T-cell (primary cell): ENCODE measurements at regions of chrX and their contacts with region 1.

Region 1: GRCh38 chrX:154360155-154360713 is 14.2 kb downstream of the FLNA start:
- DNase-seq: no peak
- ATAC-seq: no peak
- H3K4me3 ChIP-seq: no peak overlapping the region
- H3K4me3 Mint-ChIP-seq: no peak overlapping the region
- H3K27ac ChIP-seq: peak overlapping the region; percentile 52
- H3K27ac Mint-ChIP-seq: peak overlapping the region in 1 of 2 donors; percentile 34
- H3K4me1 ChIP-seq: peaks cover 0 to 92% of the 10 kb centered on the region in 2 experiments
- H3K4me1 Mint-ChIP-seq: peaks cover 9 to 44% (median 20%) of the 10 kb centered on the region in 3 donors
- H3K27me3 ChIP-seq: no peaks in the 10 kb centered on the region
- H3K27me3 Mint-ChIP-seq: no peaks in the 10 kb centered on the region

Region 2: GRCh38 chrX:153845842-153846241 is 514.4 kb before region 1 on chrX:
- CTCF ChIA-PET with region 1: no interaction called
- POLR2A ChIA-PET with region 1: no interaction called
- DNase-seq: no peak
- ATAC-seq: no peak
- H3K4me3 ChIP-seq: no peak overlapping the region
- H3K4me3 Mint-ChIP-seq: no peak overlapping the region
- H3K27ac ChIP-seq: no peak overlapping the region
- H3K27ac Mint-ChIP-seq: no peak overlapping the region
- H3K4me1 ChIP-seq: no peaks in the 10 kb centered on the region
- H3K4me1 Mint-ChIP-seq: no peaks in the 10 kb centered on the region
- H3K27me3 ChIP-seq: peaks cover 3 to 11% of the 10 kb centered on the region in 2 experiments
- H3K27me3 Mint-ChIP-seq: peaks cover 7 to 38% of the 10 kb centered on the region in 2 donors

Region 3: DNA sequence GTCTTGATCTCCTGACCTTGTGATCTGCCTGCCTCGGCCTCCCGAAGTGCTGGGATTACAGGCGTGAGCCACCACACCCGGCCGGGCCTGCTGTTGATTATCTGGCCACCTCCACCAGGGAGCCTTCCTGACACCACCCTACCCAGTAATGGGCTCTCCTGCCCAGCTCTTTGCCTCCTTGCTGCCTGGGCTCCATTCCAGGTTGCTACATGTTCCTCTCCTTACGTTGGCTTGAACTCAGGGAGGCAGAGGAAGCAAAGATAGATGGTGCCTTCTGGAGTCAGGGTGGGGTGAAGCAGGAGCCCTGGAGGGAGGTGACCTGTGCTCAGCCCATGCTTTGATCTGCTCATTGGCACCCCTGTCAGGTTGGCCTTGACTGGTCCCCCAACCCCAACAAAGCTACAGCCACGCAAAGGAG is 12.1 kb before region 1 on chrX:
- CTCF ChIA-PET with region 1: no interaction called
- POLR2A ChIA-PET with region 1: no interaction called
- DNase-seq: peak in 1 of 35 experiments; percentile 25
- ATAC-seq: no peak
- H3K4me3 ChIP-seq: no peak overlapping the region
- H3K4me3 Mint-ChIP-seq: peak overlapping the region in 1 of 3 donors; percentile 29
- H3K27ac ChIP-seq: peak overlapping the region; percentile 58
- H3K27ac Mint-ChIP-seq: peak overlapping the region; percentile 63 to 69
- H3K4me1 ChIP-seq: peaks cover 4 to 61% of the 10 kb centered on the region in 2 experiments
- H3K4me1 Mint-ChIP-seq: peaks cover 34 to 55% (median 41%) of the 10 kb centered on the region in 3 donors
- H3K27me3 ChIP-seq: no peaks in the 10 kb centered on the region
- H3K27me3 Mint-ChIP-seq: no peaks in the 10 kb centered on the region

Region 4: DNA sequence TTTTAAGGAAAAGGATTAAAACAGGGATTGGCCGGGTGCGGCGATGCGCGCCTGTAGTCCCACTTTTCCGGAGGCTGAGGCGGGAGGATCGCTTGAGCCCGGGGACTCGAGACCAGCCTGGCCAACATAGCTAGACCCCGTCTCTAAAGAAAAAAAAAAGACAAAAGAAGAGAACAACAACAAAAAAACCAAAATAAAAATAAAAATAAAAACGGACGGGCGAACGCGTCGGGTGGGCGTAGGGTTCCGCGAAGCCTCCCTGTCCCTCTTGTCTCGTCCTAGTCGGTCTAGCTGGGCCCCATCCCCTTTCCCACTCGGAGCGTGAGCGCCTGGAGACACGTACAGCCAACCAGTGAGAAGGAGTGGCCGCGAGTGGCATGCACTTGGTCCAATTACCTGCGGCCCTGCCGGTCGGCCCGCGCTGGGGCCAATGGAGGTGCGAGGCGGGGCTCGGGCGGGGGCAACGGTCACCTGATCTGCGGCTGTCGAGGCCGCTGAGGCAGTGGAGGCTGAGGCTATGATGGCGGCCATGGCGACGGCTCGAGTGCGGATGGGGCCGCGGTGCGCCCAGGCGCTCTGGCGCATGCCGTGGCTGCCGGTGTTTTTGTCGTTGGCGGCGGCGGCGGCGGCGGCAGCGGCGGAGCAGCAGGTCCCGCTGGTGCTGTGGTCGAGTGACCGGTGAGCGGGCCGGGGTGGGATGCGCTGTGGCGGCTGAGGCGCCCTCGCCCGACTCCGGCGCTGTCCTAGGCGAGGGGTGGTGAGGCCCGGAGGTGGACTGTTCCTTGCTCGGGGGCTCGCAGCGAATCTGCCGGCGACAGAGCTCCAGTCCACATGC is 68.2 kb after region 1 on chrX and contains the start of gene ATP6AP1:
- CTCF ChIA-PET with region 1: no interaction called
- POLR2A ChIA-PET with region 1: no interaction called
- DNase-seq: peak; percentile 67 to 91 (median 86)
- ATAC-seq: peak; percentile 98 to 99 (median 98)
- H3K4me3 ChIP-seq: peak within 1 kb of the TSS; percentile 41 to 67
- H3K4me3 Mint-ChIP-seq: peak within 1 kb of the TSS; percentile 74 to 83 (median 76)
- H3K27ac ChIP-seq: peak within 1 kb of the TSS; percentile 60
- H3K27ac Mint-ChIP-seq: peak within 1 kb of the TSS; percentile 81 to 83
- H3K4me1 ChIP-seq: peaks cover 0 to 28% of the 10 kb centered on the region in 2 experiments
- H3K4me1 Mint-ChIP-seq: peaks cover 18 to 30% (median 29%) of the 10 kb centered on the region in 3 donors
- H3K27me3 ChIP-seq: no peaks in the 10 kb centered on the region
- H3K27me3 Mint-ChIP-seq: peaks cover 0 to 7% of the 10 kb centered on the region in 2 donors
- total RNA-seq, gene ATP6AP1: 37.9 to 56.8 (median 53.6) TPM

Region 5: DNA sequence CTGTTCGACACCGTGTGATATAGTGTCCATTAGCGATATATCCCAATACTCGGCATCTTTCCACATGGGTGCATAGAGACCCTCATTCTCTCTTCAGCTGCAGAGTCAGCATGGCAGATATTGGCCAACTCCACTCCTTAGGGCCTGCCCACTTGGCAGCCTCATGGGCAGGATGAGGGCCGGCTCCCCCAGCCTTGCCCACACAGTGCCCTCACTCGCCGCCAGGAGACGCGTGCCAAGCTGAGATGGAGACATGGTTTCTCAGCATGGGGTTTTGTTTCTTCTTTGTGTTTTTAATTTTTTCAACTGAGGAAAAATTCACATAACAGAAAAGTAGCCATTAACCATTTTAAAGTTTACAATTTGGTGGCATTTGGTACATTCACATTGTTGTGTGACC is 92.6 kb after region 1 on chrX:
- CTCF ChIA-PET with region 1: no interaction called
- POLR2A ChIA-PET with region 1: interaction called in 1 of 2 experiments, 19 read pairs
- DNase-seq: no peak
- ATAC-seq: no peak
- H3K4me3 ChIP-seq: no peak overlapping the region
- H3K4me3 Mint-ChIP-seq: no peak overlapping the region
- H3K27ac ChIP-seq: no peak overlapping the region
- H3K27ac Mint-ChIP-seq: no peak overlapping the region
- H3K4me1 ChIP-seq: peaks cover 0 to 6% of the 10 kb centered on the region in 2 experiments
- H3K4me1 Mint-ChIP-seq: peaks cover 0 to 5% (median 4%) of the 10 kb centered on the region in 3 donors
- H3K27me3 ChIP-seq: no peaks in the 10 kb centered on the region
- H3K27me3 Mint-ChIP-seq: peaks cover 0 to 6% of the 10 kb centered on the region in 2 donors

Region 6: DNA sequence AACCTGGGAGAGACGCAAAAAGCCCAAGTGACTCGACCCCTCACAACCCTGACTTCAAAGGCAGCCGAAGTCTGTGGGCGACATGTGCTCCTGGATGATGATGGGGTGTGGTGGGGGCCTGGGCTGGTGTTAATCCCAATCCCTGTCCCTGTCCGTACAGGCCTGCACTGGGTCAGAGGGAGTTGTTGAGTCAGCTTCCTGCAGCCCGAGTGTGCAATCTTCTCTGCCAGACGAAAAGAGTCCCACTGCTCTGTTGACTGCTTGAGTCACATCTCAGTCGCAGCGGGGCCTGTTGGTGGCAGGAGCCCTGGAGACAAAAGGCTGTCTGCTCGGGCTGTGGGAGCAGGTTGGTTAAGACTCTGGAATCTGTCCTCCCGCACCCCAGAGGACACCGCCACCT is 145.5 kb after region 1 on chrX:
- CTCF ChIA-PET with region 1: no interaction called
- POLR2A ChIA-PET with region 1: no interaction called
- DNase-seq: no peak
- ATAC-seq: no peak
- H3K4me3 ChIP-seq: no peak overlapping the region
- H3K4me3 Mint-ChIP-seq: no peak overlapping the region
- H3K27ac ChIP-seq: no peak overlapping the region
- H3K27ac Mint-ChIP-seq: peak overlapping the region in 1 of 2 donors; percentile 16
- H3K4me1 ChIP-seq: no peaks in the 10 kb centered on the region
- H3K4me1 Mint-ChIP-seq: peaks cover under 1 to 2% (median 2%) of the 10 kb centered on the region in 3 donors
- H3K27me3 ChIP-seq: no peaks in the 10 kb centered on the region
- H3K27me3 Mint-ChIP-seq: peaks cover 0 to 3% of the 10 kb centered on the region in 2 donors